ENCODE measurements at regions of chr17 and their contacts with region 1.

Region 1: GRCh38 chr17:29252101-29252866 is 5.6 kb downstream of the CRYBA1 start:
- DNase-seq: peak; percentile 39

Region 2: GRCh38 chr17:29155227-29155965 is 96.9 kb before region 1 on chr17:
- in situ Hi-C with region 1: loop called (anchors 25 kb)
- DNase-seq: no peak

Region 3: DNA sequence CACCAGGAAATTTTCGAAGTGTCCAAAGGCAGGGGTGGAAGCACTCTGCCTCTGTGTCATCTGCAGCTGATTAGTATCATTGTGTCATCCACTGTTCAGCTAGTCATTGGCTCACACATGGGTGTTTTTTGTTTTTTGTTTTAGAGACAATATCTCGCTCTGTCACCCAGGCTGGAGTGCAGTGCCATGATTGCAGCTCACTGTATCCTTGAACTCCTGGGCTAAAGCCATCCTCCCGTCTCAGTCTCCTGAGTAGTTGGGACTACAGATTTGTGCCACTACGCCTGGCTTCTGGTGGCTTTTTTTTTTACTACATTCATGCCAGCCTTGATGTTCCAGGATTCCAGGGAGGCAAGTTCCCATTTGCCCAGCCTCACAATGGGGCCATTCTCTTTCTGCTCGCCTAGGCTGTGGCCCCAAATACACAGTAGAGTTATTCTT is 39.6 kb before region 1 on chr17:
- in situ Hi-C with region 1: no loop called
- DNase-seq: peak; percentile 13

Region 4: DNA sequence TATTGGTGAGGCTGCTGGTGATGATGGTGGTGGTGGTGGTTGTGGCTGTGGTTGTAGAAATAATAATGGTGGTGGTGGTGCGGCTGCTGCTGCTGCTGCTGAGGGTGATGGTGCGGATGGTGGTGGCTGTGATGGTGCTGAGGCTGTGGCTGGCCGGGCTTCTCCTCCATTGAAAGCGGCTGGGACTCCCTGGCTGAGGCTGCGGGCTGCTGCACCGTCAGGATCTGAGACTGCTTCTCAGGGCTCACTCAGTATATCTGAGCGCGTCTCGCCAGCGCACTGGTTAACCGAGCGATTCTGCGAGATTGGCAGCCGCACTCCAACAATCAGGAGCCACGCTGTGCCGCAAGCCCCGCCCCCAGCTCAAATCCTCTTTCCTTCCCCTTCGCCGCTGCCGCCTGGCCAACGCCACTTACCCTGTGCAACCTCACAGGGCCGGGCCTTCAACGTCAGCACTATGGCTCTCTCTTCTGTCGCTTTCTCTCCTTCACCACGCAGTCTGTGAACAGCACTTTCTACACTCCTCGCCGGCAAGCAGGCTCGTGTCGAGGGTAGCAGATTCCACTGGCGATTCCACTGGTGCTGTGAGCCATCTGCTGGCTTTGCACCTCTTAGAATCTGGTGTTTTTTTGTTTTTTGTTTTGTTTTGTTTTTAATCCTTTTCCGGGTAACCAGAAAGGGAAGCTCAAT is 41.8 kb after region 1 on chr17 and contains the start of gene NUFIP2:
- in situ Hi-C with region 1: no loop called
- DNase-seq: peak; percentile 100
- total RNA-seq, gene NUFIP2: 22.3 and 30.8 TPM in 2 replicates

Measured in G401 (cell line).